Caco-2 (cell line): ENCODE measurements at regions of chr13 and their contacts with region 1.

Region 1: DNA sequence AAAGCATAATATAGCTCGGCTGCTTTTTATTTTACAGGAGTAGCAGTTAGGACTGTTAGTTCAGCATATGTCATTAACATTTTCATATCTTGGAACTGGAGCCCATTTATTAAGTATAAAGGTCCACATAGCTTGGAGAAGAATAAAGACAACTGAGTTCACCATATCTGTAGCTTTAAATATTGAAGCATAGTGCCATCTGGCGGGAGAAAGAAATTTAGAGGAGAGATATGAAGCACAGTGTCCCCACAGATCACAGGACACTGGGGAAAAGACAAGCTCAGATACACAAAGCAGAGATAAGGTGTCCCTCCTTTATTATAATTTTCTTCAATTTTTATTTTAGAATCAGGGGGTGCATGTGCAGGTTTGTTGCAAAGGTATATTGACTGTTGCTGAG is 104.7 kb upstream of the FREM2 start:
- DNase-seq: peak in 1 of 2 experiments; percentile 60
- H3K4me3 ChIP-seq: no peak overlapping the region
- H3K4me3 Mint-ChIP-seq: no peak overlapping the region
- H3K27ac Mint-ChIP-seq: no peak overlapping the region
- H3K4me1 ChIP-seq: no peaks in the 10 kb centered on the region
- H3K4me1 Mint-ChIP-seq: no peaks in the 10 kb centered on the region
- H3K27me3 ChIP-seq: no peaks in the 10 kb centered on the region
- H3K27me3 Mint-ChIP-seq: no peaks in the 10 kb centered on the region
- CTCF ChIP-seq: peak; percentile 58 to 71

Region 2: GRCh38 chr13:37640499-37640898 is 941.6 kb before region 1 on chr13:
- CTCF ChIA-PET with region 1: interaction called, 7 read pairs
- POLR2A ChIA-PET with region 1: no interaction called
- intact Hi-C with region 1: loop called (anchors 1 kb)
- DNase-seq: peak in 1 of 2 experiments; percentile 10
- H3K4me3 ChIP-seq: no peak overlapping the region
- H3K4me3 Mint-ChIP-seq: no peak overlapping the region
- H3K27ac Mint-ChIP-seq: no peak overlapping the region
- H3K4me1 ChIP-seq: no peaks in the 10 kb centered on the region
- H3K4me1 Mint-ChIP-seq: no peaks in the 10 kb centered on the region
- H3K27me3 ChIP-seq: no peaks in the 10 kb centered on the region
- H3K27me3 Mint-ChIP-seq: peaks cover 21% of the 10 kb centered on the region
- CTCF ChIP-seq: peak; percentile 40 to 49

Region 3: GRCh38 chr13:37769078-37769477 is 813.1 kb before region 1 on chr13:
- CTCF ChIA-PET with region 1: interaction called, 4 read pairs
- POLR2A ChIA-PET with region 1: no interaction called
- intact Hi-C with region 1: loop called (anchors 1 kb)
- DNase-seq: no peak
- H3K4me3 ChIP-seq: no peak overlapping the region
- H3K4me3 Mint-ChIP-seq: no peak overlapping the region
- H3K27ac Mint-ChIP-seq: no peak overlapping the region
- H3K4me1 ChIP-seq: no peaks in the 10 kb centered on the region
- H3K4me1 Mint-ChIP-seq: no peaks in the 10 kb centered on the region
- H3K27me3 ChIP-seq: no peaks in the 10 kb centered on the region
- H3K27me3 Mint-ChIP-seq: peaks cover 3% of the 10 kb centered on the region
- CTCF ChIP-seq: peak in 1 of 2 experiments; percentile 13

Region 4: GRCh38 chr13:37869756-37870488 is 712.2 kb before region 1 on chr13 and contains the start of gene TRPC4:
- CTCF ChIA-PET with region 1: interaction called, 5 read pairs
- POLR2A ChIA-PET with region 1: no interaction called
- intact Hi-C with region 1: loop called (anchors 5 kb)
- DNase-seq: peak; percentile 42 to 46
- H3K4me3 ChIP-seq: no peak within 1 kb of the TSS
- H3K4me3 Mint-ChIP-seq: no peak within 1 kb of the TSS
- H3K27ac Mint-ChIP-seq: no peak within 1 kb of the TSS
- H3K4me1 ChIP-seq: no peaks in the 10 kb centered on the region
- H3K4me1 Mint-ChIP-seq: no peaks in the 10 kb centered on the region
- H3K27me3 ChIP-seq: no peaks in the 10 kb centered on the region; the same call in 1 of the 2 replicates
- H3K27me3 Mint-ChIP-seq: peaks cover 18% of the 10 kb centered on the region
- CTCF ChIP-seq: peak in 1 of 2 experiments; percentile 53
- total RNA-seq, gene TRPC4: not detected in 2 replicates

Region 5: GRCh38 chr13:38045307-38046048 is 536.7 kb before region 1 on chr13:
- CTCF ChIA-PET with region 1: no interaction called
- POLR2A ChIA-PET with region 1: no interaction called
- intact Hi-C with region 1: loop called (anchors 1 kb)
- DNase-seq: peak in 1 of 2 experiments; percentile 47
- H3K4me3 ChIP-seq: no peak overlapping the region
- H3K4me3 Mint-ChIP-seq: no peak overlapping the region
- H3K27ac Mint-ChIP-seq: no peak overlapping the region
- H3K4me1 ChIP-seq: no peaks in the 10 kb centered on the region
- H3K4me1 Mint-ChIP-seq: no peaks in the 10 kb centered on the region
- H3K27me3 ChIP-seq: no peaks in the 10 kb centered on the region
- H3K27me3 Mint-ChIP-seq: no peaks in the 10 kb centered on the region
- CTCF ChIP-seq: peak; percentile 56 to 85

Region 6: DNA sequence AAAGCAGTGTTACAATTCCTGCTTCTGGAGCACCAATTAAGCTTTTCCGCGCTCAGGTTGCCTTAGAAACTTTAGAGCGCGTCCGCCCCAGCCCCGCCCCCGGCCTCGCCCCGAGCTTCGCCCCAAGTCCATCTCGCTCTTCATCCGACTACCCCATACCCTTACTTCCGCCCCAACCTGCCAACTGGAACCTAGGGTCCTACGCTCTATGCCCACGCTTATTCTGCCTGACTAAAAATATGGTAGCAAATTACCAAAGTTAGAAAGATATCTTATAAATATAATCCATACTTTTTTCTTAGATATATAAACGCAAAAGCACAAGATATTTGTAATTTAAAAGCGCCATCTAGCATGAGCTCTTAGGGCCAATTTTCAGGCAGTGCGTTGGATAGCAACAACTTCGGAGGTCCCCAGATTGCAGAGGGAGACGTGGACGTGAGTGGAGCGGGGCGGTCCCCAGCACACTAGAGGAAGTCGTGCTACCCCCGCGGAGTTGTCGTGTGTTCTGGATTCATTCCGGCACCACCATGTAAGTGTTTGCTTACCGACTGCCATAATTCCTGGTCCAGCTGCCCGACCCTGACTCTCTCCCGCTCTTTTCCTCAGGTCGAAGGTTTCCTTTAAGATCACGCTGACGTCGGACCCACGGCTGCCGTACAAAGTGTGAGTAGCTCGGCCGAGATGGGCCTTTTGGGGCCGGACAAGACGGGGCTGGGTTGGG is 232.6 kb before region 1 on chr13 and contains the start of gene UFM1:
- CTCF ChIA-PET with region 1: interaction called, 5 read pairs
- POLR2A ChIA-PET with region 1: no interaction called
- intact Hi-C with region 1: loop called (anchors 5 kb)
- DNase-seq: peak; percentile 91 to 95
- H3K4me3 ChIP-seq: peak within 1 kb of the TSS; percentile 88
- H3K4me3 Mint-ChIP-seq: peak within 1 kb of the TSS; percentile 89
- H3K27ac Mint-ChIP-seq: peak within 1 kb of the TSS; percentile 93
- H3K4me1 ChIP-seq: peaks cover 22% of the 10 kb centered on the region
- H3K4me1 Mint-ChIP-seq: peaks cover 34% of the 10 kb centered on the region
- H3K27me3 ChIP-seq: no peaks in the 10 kb centered on the region
- H3K27me3 Mint-ChIP-seq: no peaks in the 10 kb centered on the region
- CTCF ChIP-seq: no peak
- total RNA-seq, gene UFM1: 98.3 and 106 TPM in 2 replicates

Region 7: GRCh38 chr13:38462605-38463004 is 119.5 kb before region 1 on chr13:
- CTCF ChIA-PET with region 1: no interaction called
- POLR2A ChIA-PET with region 1: no interaction called
- intact Hi-C with region 1: no loop called
- DNase-seq: no peak
- H3K4me3 ChIP-seq: no peak overlapping the region
- H3K4me3 Mint-ChIP-seq: no peak overlapping the region
- H3K27ac Mint-ChIP-seq: no peak overlapping the region
- H3K4me1 ChIP-seq: no peaks in the 10 kb centered on the region
- H3K4me1 Mint-ChIP-seq: no peaks in the 10 kb centered on the region
- H3K27me3 ChIP-seq: no peaks in the 10 kb centered on the region
- H3K27me3 Mint-ChIP-seq: no peaks in the 10 kb centered on the region
- CTCF ChIP-seq: no peak

Region 8: DNA sequence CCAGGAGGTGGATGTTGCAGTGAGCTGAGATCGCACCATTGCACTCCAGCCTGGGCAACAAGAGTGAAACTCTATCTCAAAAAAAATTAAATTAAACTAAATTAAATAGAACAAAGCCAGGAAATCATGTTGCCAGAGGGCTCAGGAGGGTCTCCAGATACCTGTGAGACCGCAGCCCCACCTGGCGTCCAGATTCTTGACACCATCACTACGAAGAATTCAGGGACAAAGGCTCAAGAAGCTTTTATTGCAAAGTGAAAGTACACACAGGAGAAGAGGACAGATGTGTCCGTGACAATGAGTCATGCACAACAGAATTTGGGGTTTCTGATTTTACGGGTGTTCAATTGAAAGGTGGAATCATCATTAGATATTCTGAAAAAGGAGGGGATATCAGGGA is 331.9 kb after region 1 on chr13:
- CTCF ChIA-PET with region 1: interaction called, 4 read pairs
- POLR2A ChIA-PET with region 1: no interaction called
- intact Hi-C with region 1: loop called (anchors 1 kb)
- DNase-seq: no peak
- H3K4me3 ChIP-seq: no peak overlapping the region
- H3K4me3 Mint-ChIP-seq: no peak overlapping the region
- H3K27ac Mint-ChIP-seq: no peak overlapping the region
- H3K4me1 ChIP-seq: peaks cover 5% of the 10 kb centered on the region
- H3K4me1 Mint-ChIP-seq: peaks cover 6% of the 10 kb centered on the region
- H3K27me3 ChIP-seq: no peaks in the 10 kb centered on the region
- H3K27me3 Mint-ChIP-seq: peaks cover 4% of the 10 kb centered on the region
- CTCF ChIP-seq: no peak